Esophagus muscularis mucosa (tissue), 4 donors: ENCODE measurements at regions of chr3 and their contacts with region 1.

Region 1: GRCh38 chr3:29525254-29525881 is 244.5 kb downstream of the RBMS3 start:
- DNase-seq: no peak
- H3K4me3 ChIP-seq: no peak overlapping the region
- H3K27ac ChIP-seq: peak overlapping the region; percentile 34 to 74 (median 44)
- H3K4me1 ChIP-seq: peaks cover 27 to 56% (median 37%) of the 10 kb centered on the region in 4 donors
- H3K27me3 ChIP-seq: no peaks in the 10 kb centered on the region
- CTCF ChIP-seq: no peak
- EP300 ChIP-seq: no peak
- POLR2A ChIP-seq: no peak

Region 2: DNA sequence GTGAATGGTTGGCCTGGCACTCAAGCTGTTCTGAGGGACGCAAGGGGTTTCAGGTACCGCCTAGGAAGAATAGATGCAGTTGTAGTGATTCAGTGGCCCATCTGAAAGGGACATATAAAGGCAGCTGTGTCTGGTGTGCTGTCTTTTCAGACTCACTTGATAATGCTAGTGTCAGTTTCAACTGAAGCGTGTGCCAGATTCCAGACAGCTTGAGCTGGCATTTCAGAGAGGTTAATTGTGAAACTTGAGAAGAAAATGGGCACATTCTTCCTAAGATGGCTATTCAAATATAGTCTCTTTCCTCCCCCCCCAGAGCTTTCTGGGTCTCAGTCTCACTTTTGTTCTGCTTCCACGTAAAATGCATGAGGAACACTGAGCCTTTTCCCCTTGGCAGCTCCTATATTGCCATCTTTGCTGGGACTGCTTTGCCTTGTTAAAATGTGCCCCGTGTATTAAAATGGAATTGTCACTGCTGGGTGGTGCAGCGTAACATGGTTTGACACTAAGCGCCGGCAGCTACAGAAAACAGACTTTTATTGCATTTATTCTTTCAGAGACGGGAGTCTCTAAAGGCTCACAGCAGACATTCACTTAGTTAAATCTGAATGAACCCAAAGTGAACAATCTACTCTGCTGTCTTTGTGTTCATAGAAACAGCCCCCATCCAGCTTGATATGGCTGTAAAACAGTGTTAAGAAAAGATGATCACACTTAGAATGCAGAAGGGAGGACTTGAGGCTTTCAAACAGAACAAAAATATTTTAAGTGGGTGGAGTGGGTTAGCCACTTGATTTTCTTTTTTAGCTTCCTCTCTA is 234.2 kb after region 1 on chr3:
- intact Hi-C with region 1: loop called (anchors 5 kb)
- DNase-seq: no peak
- H3K4me3 ChIP-seq: peak overlapping the region in 3 of 4 donors; percentile 5 to 11 (median 6)
- H3K27ac ChIP-seq: peak overlapping the region; percentile 62 to 78 (median 70)
- H3K4me1 ChIP-seq: peaks cover 41 to 68% (median 61%) of the 10 kb centered on the region in 4 donors
- H3K27me3 ChIP-seq: no peaks in the 10 kb centered on the region
- CTCF ChIP-seq: no peak
- EP300 ChIP-seq: no peak
- POLR2A ChIP-seq: no peak